ENCODE measurements at regions of chr3 and their contacts with region 1.

Region 1: DNA sequence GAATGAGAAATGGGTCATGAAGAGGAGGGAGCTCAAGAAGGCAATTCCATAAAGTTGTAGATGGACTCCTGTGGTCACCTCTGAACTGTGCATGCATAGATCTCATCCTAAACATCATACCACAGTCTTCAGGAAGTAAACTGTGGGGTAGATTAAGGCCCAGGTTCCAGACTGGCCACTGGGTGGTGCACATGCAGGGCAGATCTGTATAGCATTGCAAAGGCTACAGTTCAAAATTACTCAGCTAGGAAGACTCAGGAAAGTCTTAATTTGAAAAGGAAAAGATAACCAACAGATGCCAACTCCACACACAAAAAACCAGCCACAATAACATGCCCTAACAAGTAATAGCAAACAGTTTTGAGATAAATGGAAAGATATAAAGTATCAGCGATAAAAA is 20.3 kb downstream of the KY start:
- DNase-seq: no peak
- H3K4me3 ChIP-seq: no peak overlapping the region
- CTCF ChIP-seq: peak; percentile 56

Region 2: DNA sequence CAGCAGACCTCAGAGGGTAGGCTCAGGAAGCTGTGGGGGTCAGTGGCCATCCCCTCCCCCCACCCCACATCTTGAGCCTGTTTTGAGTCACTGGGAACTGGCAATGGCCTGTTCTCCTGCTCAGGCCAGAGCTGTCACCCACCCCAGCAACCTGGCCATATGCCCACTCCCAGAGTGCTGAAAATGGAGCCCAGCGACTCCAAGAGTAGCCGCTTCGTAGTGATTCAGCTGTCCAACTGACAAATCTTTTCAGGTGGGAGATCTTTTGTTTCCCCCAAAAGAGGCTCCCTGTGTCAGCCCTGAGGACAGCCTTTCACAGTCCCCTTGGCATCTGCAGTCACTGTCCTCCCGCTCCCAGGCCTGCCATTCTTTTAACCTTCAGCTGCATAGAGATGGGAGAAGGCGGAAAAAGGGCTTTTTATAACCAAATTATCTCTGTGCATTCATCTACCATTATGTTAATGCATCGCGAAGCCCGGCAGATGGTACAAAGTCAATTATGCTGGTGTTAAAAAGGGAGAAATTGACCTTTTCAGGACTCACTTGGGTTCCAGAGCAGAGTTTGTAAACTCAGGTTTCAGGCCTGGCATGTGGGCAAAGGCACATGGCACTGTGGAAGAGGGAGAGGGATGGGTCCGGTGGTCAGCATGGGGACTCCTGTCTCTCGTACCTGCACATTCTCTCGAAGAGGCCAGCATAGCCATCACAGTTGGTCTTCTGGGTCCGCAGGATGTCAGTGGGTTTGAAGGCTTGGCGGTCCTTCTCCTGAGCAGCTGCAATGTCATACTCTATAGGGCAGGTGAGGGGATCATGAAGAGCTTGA is 11.8 kb before region 1 on chr3:
- CTCF ChIA-PET with region 1: interaction called, 10 read pairs
- POLR2A ChIA-PET with region 1: no interaction called
- DNase-seq: no peak
- H3K4me3 ChIP-seq: no peak overlapping the region
- CTCF ChIP-seq: no peak